T-cell (primary cell): ENCODE measurements at regions of chr22 and their contacts with region 1.

Region 1: DNA sequence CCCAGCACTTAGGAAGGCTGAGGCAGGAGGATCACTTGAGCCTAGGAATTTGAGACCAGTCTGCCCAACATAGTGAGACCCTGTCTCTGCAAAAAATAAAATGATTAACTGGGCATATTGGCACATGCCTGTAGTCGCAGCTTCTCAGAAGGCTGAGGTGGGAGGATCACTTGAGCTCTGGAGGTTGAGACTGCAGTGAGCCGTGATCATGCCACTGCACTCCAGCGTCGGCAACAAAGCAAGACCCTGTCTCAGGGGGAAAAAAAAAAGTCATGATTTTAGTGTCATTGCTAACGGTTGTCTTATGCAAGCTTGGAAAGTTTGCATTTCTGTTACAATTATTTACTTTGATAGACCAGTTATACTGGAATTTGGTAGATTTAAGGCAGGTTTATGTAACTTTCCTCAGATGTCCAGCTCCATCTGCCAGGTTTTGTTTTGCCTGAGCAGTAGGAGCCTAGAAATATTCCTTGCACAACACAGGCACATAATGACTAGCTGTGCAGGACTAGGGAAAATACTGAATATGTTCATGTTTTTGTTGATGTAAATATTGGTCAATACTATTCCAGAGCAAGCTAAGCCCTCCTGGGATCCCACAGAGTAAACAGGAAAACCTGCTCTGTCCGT is 12.1 kb downstream of the UBE2L3 start:
- DNase-seq: no peak
- ATAC-seq: no peak
- H3K4me3 ChIP-seq: no peak overlapping the region
- H3K4me3 Mint-ChIP-seq: peak overlapping the region in 1 of 3 donors; percentile 28
- H3K27ac ChIP-seq: no peak overlapping the region
- H3K27ac Mint-ChIP-seq: no peak overlapping the region
- H3K4me1 ChIP-seq: peaks cover 0 to 77% of the 10 kb centered on the region in 2 experiments
- H3K4me1 Mint-ChIP-seq: peaks cover 44 to 67% (median 59%) of the 10 kb centered on the region in 3 donors
- H3K27me3 ChIP-seq: no peaks in the 10 kb centered on the region
- H3K27me3 Mint-ChIP-seq: no peaks in the 10 kb centered on the region

Region 2: DNA sequence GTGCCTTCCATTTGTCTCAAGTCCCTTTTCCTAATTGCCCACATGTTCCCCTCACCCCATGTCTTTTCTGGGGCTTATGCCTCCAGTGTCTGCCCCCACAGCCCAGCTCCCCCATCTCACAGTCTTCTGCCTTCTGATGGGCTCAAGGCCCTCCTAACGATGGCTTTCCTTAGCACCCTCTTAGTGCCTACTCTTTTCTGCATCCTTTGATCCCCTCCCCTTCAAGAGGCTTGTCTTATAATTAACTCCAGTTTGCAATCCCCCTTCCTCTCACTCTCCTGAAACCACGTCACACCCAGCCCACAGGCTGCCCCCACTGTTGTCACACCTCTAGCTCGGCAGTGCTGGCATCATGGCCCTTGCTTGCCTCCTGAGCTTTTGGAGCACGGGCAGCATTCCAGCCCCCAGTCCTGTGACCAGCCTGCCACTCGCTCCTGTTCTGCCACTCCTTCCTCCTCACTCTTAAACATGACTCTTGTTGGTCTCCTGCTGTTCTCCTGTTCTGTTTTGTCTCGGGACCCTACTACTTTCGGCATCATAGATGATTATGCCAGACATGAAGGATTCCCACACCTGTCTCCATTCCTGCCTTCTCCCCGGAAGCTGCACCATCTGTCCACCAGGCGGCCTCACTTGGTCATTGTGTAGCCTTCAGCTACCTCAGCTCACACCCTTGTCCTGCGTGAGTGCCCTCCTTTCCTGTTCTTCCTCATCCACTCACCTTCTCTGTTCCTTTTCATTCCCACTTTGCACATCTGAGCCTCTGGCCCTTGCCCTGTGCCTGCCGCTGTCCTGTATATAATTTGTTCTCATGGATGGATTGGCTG is 14.0 kb after region 1 on chr22:
- CTCF ChIA-PET with region 1: interaction called in 1 of 2 experiments, 3 read pairs
- POLR2A ChIA-PET with region 1: interaction called in 1 of 2 experiments, 13 read pairs
- DNase-seq: no peak
- ATAC-seq: no peak
- H3K4me3 ChIP-seq: no peak overlapping the region
- H3K4me3 Mint-ChIP-seq: no peak overlapping the region
- H3K27ac ChIP-seq: no peak overlapping the region
- H3K27ac Mint-ChIP-seq: peak overlapping the region in 1 of 2 donors; percentile 40
- H3K4me1 ChIP-seq: peaks cover 0 to 35% of the 10 kb centered on the region in 2 experiments
- H3K4me1 Mint-ChIP-seq: peaks cover 66 to 70% (median 68%) of the 10 kb centered on the region in 3 donors
- H3K27me3 ChIP-seq: no peaks in the 10 kb centered on the region
- H3K27me3 Mint-ChIP-seq: no peaks in the 10 kb centered on the region

Region 3: DNA sequence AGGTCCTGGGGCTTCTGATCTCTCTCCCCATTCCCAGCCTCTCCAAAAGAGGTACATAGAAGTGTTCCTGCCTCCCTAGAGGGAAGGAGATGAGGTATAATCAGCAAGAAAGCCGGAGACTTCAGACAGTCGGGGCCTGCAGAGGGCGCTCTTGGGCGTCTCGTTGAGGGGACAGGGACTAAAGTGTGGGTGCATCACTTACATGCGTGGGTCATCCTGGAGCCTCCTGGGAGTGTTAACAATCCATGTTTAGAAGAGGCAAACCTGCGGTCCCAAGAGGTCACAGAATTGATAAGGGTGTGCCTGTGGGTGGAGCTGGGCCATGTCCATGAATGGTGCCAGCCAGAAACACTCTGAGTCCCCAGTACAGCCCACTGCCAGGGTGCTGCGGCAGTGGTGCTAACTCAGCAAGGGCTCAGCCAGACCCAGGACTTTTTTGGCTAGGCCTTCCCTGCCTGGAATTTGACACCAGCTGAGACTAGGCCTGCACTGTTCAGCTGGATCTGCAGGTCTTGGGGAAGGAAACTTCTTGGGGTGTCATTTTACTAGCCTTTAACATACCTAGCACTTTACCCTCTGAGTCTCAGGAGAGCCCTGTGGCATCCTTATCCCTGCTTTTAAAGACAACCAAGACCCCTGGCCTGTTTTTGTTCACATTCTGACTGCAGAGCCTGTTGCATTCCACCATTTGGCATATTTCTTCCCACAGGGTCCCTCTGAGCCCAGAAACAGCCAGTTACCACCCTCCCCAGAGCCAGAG is 44.7 kb after region 1 on chr22:
- CTCF ChIA-PET with region 1: no interaction called
- POLR2A ChIA-PET with region 1: no interaction called
- DNase-seq: peak in 17 of 35 experiments; percentile 20 to 57 (median 35)
- ATAC-seq: no peak
- H3K4me3 ChIP-seq: no peak overlapping the region
- H3K4me3 Mint-ChIP-seq: no peak overlapping the region
- H3K27ac ChIP-seq: peak overlapping the region; percentile 7
- H3K27ac Mint-ChIP-seq: peak overlapping the region; percentile 39 to 92
- H3K4me1 ChIP-seq: peaks cover 7 to 50% of the 10 kb centered on the region in 2 experiments
- H3K4me1 Mint-ChIP-seq: peaks cover 44 to 54% (median 53%) of the 10 kb centered on the region in 3 donors
- H3K27me3 ChIP-seq: no peaks in the 10 kb centered on the region
- H3K27me3 Mint-ChIP-seq: no peaks in the 10 kb centered on the region

Region 4: GRCh38 chr22:21726650-21727049 is 147.0 kb after region 1 on chr22:
- CTCF ChIA-PET with region 1: no interaction called
- POLR2A ChIA-PET with region 1: no interaction called
- DNase-seq: peak in 28 of 35 experiments; percentile 3 to 62 (median 24)
- ATAC-seq: peak; percentile 57 to 82 (median 71)
- H3K4me3 ChIP-seq: no peak overlapping the region
- H3K4me3 Mint-ChIP-seq: no peak overlapping the region
- H3K27ac ChIP-seq: no peak overlapping the region
- H3K27ac Mint-ChIP-seq: no peak overlapping the region
- H3K4me1 ChIP-seq: peaks cover 0 to 14% of the 10 kb centered on the region in 2 experiments
- H3K4me1 Mint-ChIP-seq: peaks cover 4 to 10% (median 9%) of the 10 kb centered on the region in 3 donors
- H3K27me3 ChIP-seq: no peaks in the 10 kb centered on the region
- H3K27me3 Mint-ChIP-seq: no peaks in the 10 kb centered on the region